Heart right ventricle (tissue), 16 donors: ENCODE measurements at regions of chr22 and their contacts with region 1.

Region 1: GRCh38 chr22:17785185-17786184 is 11.2 kb upstream of the BID start:
- DNase-seq: peak; percentile 45 to 62
- ATAC-seq: peak in 5 of 8 donors; percentile 4 to 28 (median 17)
- H3K4me3 ChIP-seq: no peak overlapping the region
- H3K27ac ChIP-seq: peak overlapping the region in 9 of 10 donors; percentile 79 to 93 (median 86)
- H3K4me1 ChIP-seq: peaks cover 11 to 43% (median 37%) of the 10 kb centered on the region in 9 donors
- H3K27me3 ChIP-seq: no peaks in the 10 kb centered on the region
- CTCF ChIP-seq: peak; percentile 12 to 67 (median 56)

Region 2: DNA sequence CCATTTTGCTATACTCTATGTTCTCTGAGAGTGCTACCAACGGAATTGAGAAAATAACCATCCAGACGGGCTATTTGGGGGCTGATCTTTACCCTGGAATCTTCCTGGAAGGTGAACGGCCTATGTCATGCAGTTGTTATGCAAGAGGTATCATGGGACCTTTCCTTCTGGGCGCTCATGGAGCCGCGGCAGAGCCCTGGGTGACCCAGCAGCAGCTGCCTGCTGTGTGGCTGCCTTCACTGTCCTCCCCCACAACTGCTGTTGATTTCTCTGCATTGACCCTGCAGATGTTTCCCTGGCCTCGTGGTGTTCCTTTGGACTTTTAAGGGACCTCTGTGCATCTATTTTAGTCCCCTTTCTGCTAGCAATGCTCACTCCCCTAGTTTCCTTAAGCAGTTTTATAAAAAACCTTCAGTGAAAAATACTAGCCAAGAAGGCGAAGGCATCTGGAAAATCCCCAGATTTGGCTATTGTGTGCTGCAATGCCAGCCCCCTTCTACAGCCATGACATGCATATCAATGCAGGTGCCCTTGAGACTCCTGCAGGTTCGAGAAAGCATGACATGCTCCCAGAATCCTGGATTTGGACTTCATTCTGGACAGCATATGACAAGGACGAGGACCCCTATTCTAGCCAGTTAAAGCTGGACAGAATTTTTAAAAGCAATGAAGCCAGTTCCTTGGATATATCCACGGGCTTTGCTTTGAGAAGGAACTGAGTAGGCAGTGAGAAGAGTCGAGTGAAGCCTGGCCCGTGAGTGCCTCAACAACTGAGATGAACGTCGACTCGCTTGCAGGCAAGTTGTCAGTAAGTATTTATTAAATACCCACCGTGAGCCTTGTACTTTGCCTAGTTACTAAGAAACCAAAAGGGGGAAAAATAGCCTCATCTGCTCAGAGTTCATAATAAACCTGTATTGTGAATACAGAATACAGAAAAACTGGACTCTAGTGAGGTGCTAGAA is 222.3 kb before region 1 on chr22 and contains the start of gene SLC25A18:
- intact Hi-C with region 1: loop called in 1 of 10 experiments (anchors 10 kb)
- DNase-seq: peak; percentile 50 to 64
- ATAC-seq: peak; percentile 78 to 94 (median 92)
- H3K4me3 ChIP-seq: peak within 1 kb of the TSS in 5 of 10 donors; percentile 1 to 23 (median 5)
- H3K27ac ChIP-seq: peak within 1 kb of the TSS; percentile 55 to 88 (median 82)
- H3K4me1 ChIP-seq: peaks cover 9 to 33% (median 21%) of the 10 kb centered on the region in 9 donors
- H3K27me3 ChIP-seq: no peaks in the 10 kb centered on the region
- CTCF ChIP-seq: peak in 2 of 9 donors; percentile 4 to 14
- total RNA-seq, gene SLC25A18: 0.65 to 13.6 (median 0.87) TPM

Region 3: GRCh38 chr22:17570851-17571641 is 214.4 kb before region 1 on chr22:
- intact Hi-C with region 1: loop called in 2 of 10 experiments (anchors 5 to 10 kb)
- DNase-seq: peak; percentile 78 to 87
- ATAC-seq: peak; percentile 84 to 96 (median 94)
- H3K4me3 ChIP-seq: peak overlapping the region in 9 of 10 donors; percentile 3 to 51 (median 41)
- H3K27ac ChIP-seq: peak overlapping the region; percentile 81 to 94 (median 86)
- H3K4me1 ChIP-seq: peaks cover 11 to 35% (median 27%) of the 10 kb centered on the region in 9 donors
- H3K27me3 ChIP-seq: no peaks in the 10 kb centered on the region
- CTCF ChIP-seq: no peak

Region 4: DNA sequence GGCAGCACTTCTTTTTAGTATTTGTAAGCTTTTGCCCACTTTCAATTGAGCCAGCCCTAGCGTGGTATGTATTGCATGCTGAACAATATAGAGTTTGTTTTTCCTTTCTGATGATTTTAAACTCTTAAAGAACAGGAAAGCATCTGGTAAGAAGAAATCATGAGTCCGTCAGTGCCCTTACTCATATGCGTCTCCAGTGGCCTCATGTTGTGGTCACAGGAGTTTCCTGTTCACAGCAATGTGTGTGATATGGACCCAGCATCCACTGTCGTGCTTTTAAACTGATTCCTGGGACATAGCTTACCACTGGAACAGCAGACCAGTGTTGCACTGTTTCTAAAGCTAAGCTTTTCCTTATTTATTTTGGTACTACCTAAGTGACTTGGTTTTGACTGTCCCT is 51.3 kb before region 1 on chr22:
- intact Hi-C with region 1: loop called in 1 of 10 experiments (anchors 10 kb)
- DNase-seq: no peak
- ATAC-seq: no peak
- H3K4me3 ChIP-seq: no peak overlapping the region
- H3K27ac ChIP-seq: no peak overlapping the region
- H3K4me1 ChIP-seq: no peaks in the 10 kb centered on the region
- H3K27me3 ChIP-seq: no peaks in the 10 kb centered on the region
- CTCF ChIP-seq: no peak

Region 5: DNA sequence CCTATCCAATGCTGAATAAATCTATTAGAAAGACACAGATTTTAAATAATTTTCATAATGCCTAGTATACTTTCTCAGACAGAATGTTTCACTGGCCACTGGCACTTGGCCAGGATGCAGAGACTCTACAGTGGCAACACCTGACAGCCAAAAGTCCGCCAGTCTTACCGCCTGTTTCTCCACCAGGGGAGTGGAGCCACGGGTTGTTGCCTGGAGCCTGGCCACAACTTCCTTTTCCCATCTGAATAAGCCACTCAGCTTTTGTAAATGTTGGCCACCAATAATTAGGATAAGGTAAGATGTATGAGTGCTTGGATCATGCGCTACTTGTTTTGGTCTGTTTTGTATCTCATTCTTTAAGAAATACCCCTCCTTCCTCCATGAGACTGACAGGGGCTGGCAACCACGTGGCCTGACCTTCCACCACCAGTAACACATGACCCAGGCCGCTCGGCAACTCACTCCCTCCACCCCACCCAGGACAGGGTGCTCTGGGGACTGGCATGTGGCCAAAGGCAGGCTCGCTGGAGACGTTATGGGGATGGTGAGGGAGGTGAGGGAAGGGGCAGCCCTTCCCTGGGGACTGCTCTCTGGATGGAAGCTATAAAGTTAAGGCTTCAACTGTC is 81.8 kb after region 1 on chr22:
- intact Hi-C with region 1: no loop called
- DNase-seq: peak; percentile 73 to 76
- ATAC-seq: peak; percentile 44 to 86 (median 68)
- H3K4me3 ChIP-seq: no peak overlapping the region
- H3K27ac ChIP-seq: peak overlapping the region in 8 of 10 donors; percentile 13 to 59 (median 42)
- H3K4me1 ChIP-seq: peaks cover 7 to 51% (median 22%) of the 10 kb centered on the region in 9 donors
- H3K27me3 ChIP-seq: no peaks in the 10 kb centered on the region
- CTCF ChIP-seq: peak in 2 of 9 donors; percentile 9 to 15